IMR-90 (cell line): ENCODE measurements at regions of chr2 and their contacts with region 1.

Region 1: GRCh38 chr2:52532956-52533355 is 1234.6 kb upstream of the CHAC2 start:
- DNase-seq: peak; percentile 74
- ATAC-seq: peak; percentile 92
- H3K4me3 ChIP-seq: no peak overlapping the region
- H3K27ac ChIP-seq: peak overlapping the region; percentile 93; the same call in 1 of the 2 replicates
- H3K4me1 ChIP-seq: peaks cover 7% of the 10 kb centered on the region
- H3K27me3 ChIP-seq: no peaks in the 10 kb centered on the region
- CTCF ChIP-seq: no peak
- POLR2A ChIP-seq: no peak
- RAD21 ChIP-seq: no peak

Region 2: DNA sequence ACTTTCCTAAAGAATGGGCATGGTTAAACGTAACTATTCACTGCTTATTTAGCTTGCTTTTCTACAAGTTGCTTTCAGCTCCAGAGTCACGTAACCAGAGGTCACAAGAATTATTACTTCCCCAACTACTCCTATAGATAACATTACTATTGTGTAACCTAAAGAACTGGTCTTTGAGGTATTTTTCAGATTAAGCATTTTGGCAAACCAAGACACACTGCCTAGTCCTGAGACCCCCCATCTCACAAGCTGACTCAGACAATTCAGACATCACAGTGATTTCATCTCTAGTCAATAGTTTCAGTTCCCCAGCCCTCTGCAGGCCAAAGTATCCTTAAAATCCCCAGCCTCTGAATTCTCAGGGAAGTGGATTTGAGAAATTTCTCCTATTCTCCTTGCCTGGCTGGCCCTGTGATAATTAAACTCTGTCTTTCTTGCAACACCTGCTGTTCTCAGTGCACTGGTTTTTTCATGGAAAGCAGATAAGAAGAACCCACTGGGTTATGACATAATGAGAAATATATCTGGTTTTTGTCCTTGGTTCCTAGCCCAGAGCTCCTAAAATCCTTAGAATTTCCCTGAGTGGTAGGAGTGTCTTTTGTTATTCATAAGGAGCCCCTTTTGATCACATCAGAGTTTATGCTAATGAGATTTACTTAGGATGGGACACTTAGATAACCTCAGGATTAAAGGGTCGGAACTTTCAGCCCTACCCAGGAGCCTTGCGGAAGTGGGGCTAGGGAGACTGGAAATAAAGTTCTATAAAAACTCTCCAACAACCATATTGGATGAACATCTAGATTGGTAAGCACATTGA is 76.2 kb before region 1 on chr2:
- CTCF ChIA-PET with region 1: no interaction called
- POLR2A ChIA-PET with region 1: interaction called, 13 read pairs
- dilution Hi-C with region 1: no loop called
- in situ Hi-C with region 1: no loop called
- intact Hi-C with region 1: no loop called
- DNase-seq: no peak
- ATAC-seq: no peak
- H3K4me3 ChIP-seq: no peak overlapping the region
- H3K27ac ChIP-seq: no peak overlapping the region
- H3K4me1 ChIP-seq: no peaks in the 10 kb centered on the region
- H3K27me3 ChIP-seq: no peaks in the 10 kb centered on the region
- CTCF ChIP-seq: no peak
- POLR2A ChIP-seq: no peak
- RAD21 ChIP-seq: no peak